Pancreas (tissue), 10 donors: ENCODE measurements at regions of chr1 and their contacts with region 1.

Region 1: DNA sequence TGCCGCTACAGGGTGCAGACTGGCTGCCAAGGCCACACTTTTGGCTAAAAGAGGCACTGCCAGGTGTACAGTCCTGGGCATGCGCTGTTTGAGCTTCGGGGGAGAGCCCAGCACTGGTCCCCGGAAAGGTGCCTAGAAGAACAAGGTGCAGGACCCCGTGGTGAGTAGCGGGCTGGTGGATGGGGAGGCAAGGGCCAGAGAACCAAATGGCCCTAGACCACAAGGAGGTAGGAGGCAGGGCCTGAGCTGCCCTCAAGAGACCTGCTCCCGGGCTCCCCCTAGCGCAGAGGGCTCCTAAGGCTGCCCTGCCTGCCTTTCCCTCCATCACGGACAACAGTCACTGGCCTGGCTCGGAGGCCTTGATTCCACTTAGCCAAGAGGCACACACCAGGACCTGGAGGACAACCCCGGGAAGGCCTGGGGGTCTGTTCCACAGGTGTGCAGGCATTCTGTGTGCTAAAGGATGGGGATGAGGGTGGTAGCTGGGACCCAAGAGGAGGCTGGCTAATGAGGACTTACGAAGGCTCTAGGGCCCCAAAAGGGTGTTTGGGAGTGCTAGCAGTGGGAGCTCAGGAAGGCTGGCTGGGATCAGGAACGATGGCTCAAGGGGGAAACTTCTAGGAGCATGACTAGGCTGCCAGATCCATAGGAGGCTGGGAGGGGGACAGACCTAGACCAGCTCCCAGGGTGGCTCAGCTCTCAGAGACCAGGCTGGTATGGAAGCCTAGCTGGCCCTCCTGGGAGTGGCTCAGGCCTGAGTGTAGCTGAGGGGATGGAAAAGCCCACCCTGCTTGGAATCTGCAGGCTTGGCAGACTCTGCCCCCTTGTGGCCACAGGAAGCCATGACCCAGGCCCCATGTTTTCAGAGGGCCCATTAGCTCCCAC is 742 bp downstream of the ARTN start:
- DNase-seq: peak; percentile 68 to 91 (median 80)
- ATAC-seq: peak; percentile 70 to 76 (median 74)
- H3K4me3 ChIP-seq: peak overlapping the region in 2 of 4 donors; percentile 40 to 51
- H3K27ac ChIP-seq: peak overlapping the region in 1 of 4 donors; percentile 9
- H3K4me1 ChIP-seq: peaks cover 6 to 9% (median 8%) of the 10 kb centered on the region in 3 donors
- H3K27me3 ChIP-seq: no peaks in the 10 kb centered on the region
- CTCF ChIP-seq: peak; percentile 34 to 74 (median 70)

Region 2: GRCh38 chr1:43688594-43689000 is 245.7 kb before region 1 on chr1:
- intact Hi-C with region 1: no loop called
- DNase-seq: no peak
- ATAC-seq: peak in 3 of 4 donors; percentile 33 to 59 (median 54)
- H3K4me3 ChIP-seq: no peak overlapping the region
- H3K27ac ChIP-seq: no peak overlapping the region
- H3K4me1 ChIP-seq: no peaks in the 10 kb centered on the region
- H3K27me3 ChIP-seq: no peaks in the 10 kb centered on the region
- CTCF ChIP-seq: no peak

Region 3: GRCh38 chr1:43757343-43758053 is 176.8 kb before region 1 on chr1:
- intact Hi-C with region 1: loop called in 2 of 3 experiments (anchors 10 kb)
- DNase-seq: no peak
- ATAC-seq: peak; percentile 50 to 85 (median 72)
- H3K4me3 ChIP-seq: no peak overlapping the region
- H3K27ac ChIP-seq: no peak overlapping the region
- H3K4me1 ChIP-seq: peaks cover 0 to 10% (median 6%) of the 10 kb centered on the region in 3 donors
- H3K27me3 ChIP-seq: no peaks in the 10 kb centered on the region
- CTCF ChIP-seq: no peak

Region 4: DNA sequence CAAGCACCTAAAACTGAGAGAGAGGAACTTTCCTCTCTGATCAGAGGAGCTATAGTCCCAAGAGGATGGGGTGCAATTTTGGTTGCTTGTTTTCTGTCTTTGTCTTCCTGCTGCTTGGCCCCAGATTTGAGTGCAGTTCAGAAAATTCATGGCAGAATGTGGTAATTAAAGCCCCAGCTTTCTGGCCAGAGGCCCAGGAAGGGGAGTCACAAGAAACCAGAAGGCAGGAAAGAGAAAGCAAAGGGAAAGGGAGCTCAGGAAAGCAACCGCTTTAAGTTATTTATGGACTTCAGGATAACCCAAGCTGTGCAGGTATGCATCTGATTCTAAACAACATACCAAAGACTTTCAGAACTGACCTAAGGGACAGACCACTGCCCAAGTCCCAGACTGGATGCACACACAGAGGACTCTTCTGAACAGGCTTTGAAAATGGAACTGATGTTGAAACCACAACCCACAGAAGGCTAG is 138.2 kb before region 1 on chr1:
- intact Hi-C with region 1: no loop called
- DNase-seq: no peak
- ATAC-seq: no peak
- H3K4me3 ChIP-seq: no peak overlapping the region
- H3K27ac ChIP-seq: no peak overlapping the region
- H3K4me1 ChIP-seq: no peaks in the 10 kb centered on the region
- H3K27me3 ChIP-seq: no peaks in the 10 kb centered on the region
- CTCF ChIP-seq: no peak

Region 5: GRCh38 chr1:44144962-44145756 is 210.8 kb after region 1 on chr1:
- intact Hi-C with region 1: no loop called
- DNase-seq: no peak
- ATAC-seq: no peak
- H3K4me3 ChIP-seq: no peak overlapping the region
- H3K27ac ChIP-seq: no peak overlapping the region
- H3K4me1 ChIP-seq: no peaks in the 10 kb centered on the region
- H3K27me3 ChIP-seq: no peaks in the 10 kb centered on the region
- CTCF ChIP-seq: no peak